ENCODE measurements at regions of chr2 and their contacts with region 1.

Region 1: DNA sequence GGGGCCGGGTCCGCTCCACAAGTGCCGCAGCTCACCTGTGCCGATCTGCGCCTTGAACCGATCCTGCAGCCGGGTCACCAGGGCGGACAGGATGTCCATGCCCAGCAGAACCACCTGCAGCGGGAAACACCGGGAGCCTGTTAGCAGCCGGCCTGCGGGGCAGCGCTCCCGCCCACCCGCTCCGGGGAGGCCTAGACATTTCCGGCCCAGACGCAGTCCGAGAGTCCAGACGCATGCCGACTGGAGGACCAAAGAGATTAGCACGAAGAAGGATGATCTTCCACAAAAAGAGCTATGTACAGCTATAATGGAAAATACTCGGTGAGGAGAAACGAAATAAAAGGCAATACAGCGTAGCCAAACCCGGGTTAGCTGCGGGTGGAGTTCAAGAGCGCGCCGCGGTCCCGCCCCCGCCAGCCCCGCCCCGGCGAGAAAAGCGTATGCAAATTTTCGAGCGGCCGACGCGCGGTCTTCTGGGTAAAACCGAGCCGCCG is 421 bp upstream of the RNU4ATAC start:
- DNase-seq: peak; percentile 47 to 88
- H3K4me3 ChIP-seq: peak overlapping the region; percentile 86 to 95 (median 92)
- H3K27ac ChIP-seq: peak overlapping the region; percentile 99
- H3K4me1 ChIP-seq: peaks cover 0 to 11% (median 5%) of the 10 kb centered on the region in 4 experiments; a peak in 3 of 7 replicates
- H3K27me3 ChIP-seq: no peaks in the 10 kb centered on the region
- CTCF ChIP-seq: no peak
- EP300 ChIP-seq: no peak
- POLR2A ChIP-seq: no peak
- RAD21 ChIP-seq: no peak

Region 2: DNA sequence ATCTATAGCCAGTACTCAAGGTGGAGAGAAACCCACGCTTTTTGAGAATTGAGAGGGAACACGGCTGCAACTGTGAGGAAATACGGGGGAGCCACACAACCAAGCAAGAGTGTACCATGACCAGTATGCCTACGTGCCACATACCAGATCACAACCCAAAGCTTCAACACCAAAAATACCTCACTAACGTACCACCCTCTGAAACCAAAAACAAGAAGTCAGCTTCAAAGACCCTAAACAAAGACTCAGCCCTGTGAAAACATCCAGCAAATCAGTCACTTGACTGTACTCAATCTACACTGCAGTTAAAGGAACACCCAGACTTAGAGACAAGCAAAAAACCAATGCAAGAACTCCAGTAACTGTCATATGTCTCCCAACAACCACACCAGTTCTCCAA is 17.4 kb after region 1 on chr2:
- CTCF ChIA-PET with region 1: interaction called, 4 read pairs
- POLR2A ChIA-PET with region 1: interaction called, 36 read pairs
- DNase-seq: no peak
- H3K4me3 ChIP-seq: no peak overlapping the region
- H3K27ac ChIP-seq: no peak overlapping the region
- H3K4me1 ChIP-seq: peaks cover 0 to 3% (median 0%) of the 10 kb centered on the region in 4 experiments; a peak in 1 of 7 replicates
- H3K27me3 ChIP-seq: no peaks in the 10 kb centered on the region
- CTCF ChIP-seq: no peak
- EP300 ChIP-seq: no peak
- POLR2A ChIP-seq: no peak
- RAD21 ChIP-seq: no peak

Region 3: DNA sequence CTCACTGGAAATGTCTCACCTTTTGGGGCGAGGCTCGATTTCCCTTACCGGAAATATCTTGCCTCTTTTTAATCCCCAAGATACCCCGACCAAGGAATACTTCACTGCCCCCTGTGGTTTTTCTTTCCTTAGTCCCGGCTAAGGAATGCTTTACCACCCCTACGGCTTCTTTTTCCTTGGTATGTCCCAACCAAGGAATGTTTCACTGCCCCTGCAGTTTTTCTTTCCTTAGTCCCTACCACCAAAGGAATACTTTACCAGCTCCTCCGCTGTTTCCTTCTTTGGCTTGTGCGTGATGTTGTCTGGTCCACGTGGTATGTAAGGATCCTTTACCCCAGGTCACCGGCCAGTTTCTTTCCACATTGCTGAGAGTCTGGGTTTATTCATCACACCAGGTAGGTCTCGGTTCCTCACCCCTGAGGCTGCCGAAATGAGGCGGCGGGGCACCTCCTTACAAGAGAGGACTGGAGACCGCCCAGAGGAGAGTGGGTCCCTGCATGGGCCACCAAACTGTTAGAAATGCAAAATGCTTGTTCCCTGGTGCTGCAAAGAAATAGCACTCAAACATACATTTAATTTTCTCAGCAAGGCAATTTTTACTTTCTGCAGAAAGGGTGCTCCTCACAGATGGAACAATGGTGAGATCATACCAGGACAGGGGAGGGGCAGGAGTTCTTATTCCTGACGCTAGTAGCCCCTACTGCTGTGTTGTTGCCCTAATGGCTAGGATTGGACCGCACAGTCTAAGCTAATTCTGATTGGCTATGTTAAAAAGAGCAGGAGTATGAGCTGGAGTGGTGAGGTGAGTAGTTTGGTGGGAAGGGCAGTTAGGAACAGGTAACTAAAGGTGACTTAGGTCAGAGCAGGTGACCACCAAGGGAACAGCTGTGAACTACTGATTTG is 152.4 kb after region 1 on chr2:
- CTCF ChIA-PET with region 1: interaction called, 6 read pairs
- POLR2A ChIA-PET with region 1: interaction called, 38 read pairs
- DNase-seq: peak in 1 of 2 experiments; percentile 68
- H3K4me3 ChIP-seq: peak overlapping the region; percentile 76 to 90 (median 86)
- H3K27ac ChIP-seq: peak overlapping the region; percentile 93
- H3K4me1 ChIP-seq: peaks cover 8 to 26% (median 18%) of the 10 kb centered on the region in 4 experiments
- H3K27me3 ChIP-seq: no peaks in the 10 kb centered on the region; a peak in 1 of 7 replicates
- CTCF ChIP-seq: no peak
- EP300 ChIP-seq: peak in 1 of 2 experiments; percentile 99; a peak in 2 of 3 replicates
- POLR2A ChIP-seq: peak; percentile 83 to 89
- RAD21 ChIP-seq: no peak

Region 4: GRCh38 chr2:121699421-121700333 is 169.4 kb after region 1 on chr2:
- CTCF ChIA-PET with region 1: interaction called, 6 read pairs
- POLR2A ChIA-PET with region 1: interaction called, 20 read pairs
- DNase-seq: no peak
- H3K4me3 ChIP-seq: no peak overlapping the region
- H3K27ac ChIP-seq: no peak overlapping the region
- H3K4me1 ChIP-seq: peaks cover 0 to 10% (median 6%) of the 10 kb centered on the region in 4 experiments; a peak in 3 of 7 replicates
- H3K27me3 ChIP-seq: no peaks in the 10 kb centered on the region
- CTCF ChIP-seq: no peak
- EP300 ChIP-seq: no peak
- POLR2A ChIP-seq: no peak
- RAD21 ChIP-seq: no peak

Region 5: GRCh38 chr2:121736462-121737341 is 206.4 kb after region 1 on chr2 and contains the start of gene NIFK:
- CTCF ChIA-PET with region 1: no interaction called
- POLR2A ChIA-PET with region 1: interaction called, 22 read pairs
- DNase-seq: peak; percentile 95 to 100
- H3K4me3 ChIP-seq: peak within 1 kb of the TSS; percentile 79 to 97 (median 96)
- H3K27ac ChIP-seq: peak within 1 kb of the TSS; percentile 12; the same call in 1 of the 2 replicates
- H3K4me1 ChIP-seq: peaks cover 0 to 5% (median 1%) of the 10 kb centered on the region in 4 experiments; a peak in 4 of 7 replicates
- H3K27me3 ChIP-seq: no peaks in the 10 kb centered on the region
- CTCF ChIP-seq: no peak
- EP300 ChIP-seq: no peak
- POLR2A ChIP-seq: peak; percentile 47 to 85
- RAD21 ChIP-seq: peak in 1 of 2 experiments; percentile 3; a peak in 1 of 4 replicates
- total RNA-seq, gene NIFK: 99.3 and 117 TPM in 2 replicates